IMR-90 (cell line): ENCODE measurements at regions of chr7 and their contacts with region 1.

Region 1: DNA sequence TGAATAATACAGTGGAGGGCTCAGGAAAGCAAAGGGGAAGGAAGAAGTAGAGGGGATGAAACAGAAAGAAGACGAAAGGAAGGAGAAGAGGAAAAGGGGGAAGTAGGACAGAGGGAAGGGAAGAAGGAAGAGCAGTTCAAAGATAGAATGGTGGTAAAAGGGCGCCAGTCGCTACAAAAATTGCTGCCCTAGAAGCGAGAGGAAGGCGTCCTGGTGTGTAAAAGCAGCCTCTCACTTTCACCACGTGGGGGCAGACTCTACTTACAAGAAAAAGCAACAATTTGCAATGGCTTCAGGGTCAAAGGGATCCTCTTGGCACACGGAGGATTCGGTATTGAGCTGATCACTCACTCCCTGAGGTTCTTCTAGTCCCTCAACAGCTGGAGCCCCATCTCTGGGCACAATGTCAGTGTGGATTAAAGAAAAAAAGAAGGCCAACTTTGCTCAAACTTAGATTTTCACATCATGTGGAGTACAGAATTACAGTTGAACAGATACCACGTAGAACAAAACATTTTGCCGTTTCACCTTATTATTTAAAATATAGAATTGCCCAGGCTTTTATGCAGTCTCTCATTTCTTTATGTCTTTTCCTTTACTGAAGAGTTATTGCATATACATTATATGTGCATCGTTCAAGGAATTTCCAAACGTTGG is 31.4 kb upstream of the NPVF start:
- DNase-seq: peak; percentile 76
- ATAC-seq: peak; percentile 93
- H3K4me3 ChIP-seq: no peak overlapping the region
- H3K27ac ChIP-seq: no peak overlapping the region
- H3K4me1 ChIP-seq: no peaks in the 10 kb centered on the region
- H3K27me3 ChIP-seq: peaks cover 3% of the 10 kb centered on the region
- CTCF ChIP-seq: peak; percentile 84
- POLR2A ChIP-seq: no peak
- RAD21 ChIP-seq: peak; percentile 81

Region 2: DNA sequence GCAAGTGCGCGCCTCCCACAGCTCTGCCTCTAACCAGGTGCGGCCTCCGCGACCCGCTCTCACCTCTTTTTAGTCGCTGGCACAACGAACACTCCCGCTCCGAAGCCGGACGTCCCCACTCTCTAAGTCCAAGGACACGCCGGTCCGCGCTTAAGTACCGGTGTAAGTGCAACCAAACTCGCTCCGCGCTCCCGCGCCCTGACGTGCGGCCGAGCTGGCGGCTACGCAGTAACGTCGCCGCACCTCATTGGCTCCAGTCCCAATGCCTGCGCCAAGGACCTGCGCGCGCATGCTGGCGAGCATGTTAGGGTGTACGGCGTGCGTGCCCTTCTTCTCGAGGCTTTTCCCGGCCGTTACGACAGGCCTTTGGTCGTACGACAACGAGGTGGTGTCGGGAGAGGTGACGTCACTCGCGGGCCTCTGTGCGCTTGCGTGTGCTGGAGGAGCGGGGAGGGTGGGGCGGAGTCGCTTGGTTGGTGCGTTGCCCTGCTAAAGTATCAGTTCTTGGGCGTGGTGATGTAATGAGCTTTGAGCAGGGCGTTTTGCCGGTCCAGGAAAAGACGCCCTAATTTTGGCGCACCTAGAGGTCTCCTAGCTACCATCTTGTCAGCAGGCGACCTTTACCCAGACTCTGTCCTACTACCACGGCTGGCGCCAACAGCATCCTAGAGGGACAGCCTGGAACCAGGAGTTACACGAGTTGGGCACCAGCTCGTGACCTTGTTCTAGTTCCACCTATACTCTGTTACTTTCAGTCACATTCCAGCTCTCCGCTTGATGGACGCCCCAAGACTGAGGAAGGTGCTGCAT is 134.4 kb before region 1 on chr7 and contains the start of gene CYCS:
- CTCF ChIA-PET with region 1: no interaction called
- POLR2A ChIA-PET with region 1: no interaction called
- dilution Hi-C with region 1: no loop called
- in situ Hi-C with region 1: no loop called
- intact Hi-C with region 1: no loop called
- DNase-seq: peak; percentile 100
- ATAC-seq: peak; percentile 95
- H3K4me3 ChIP-seq: peak within 1 kb of the TSS; percentile 59
- H3K27ac ChIP-seq: peak within 1 kb of the TSS; percentile 76
- H3K4me1 ChIP-seq: no peaks in the 10 kb centered on the region
- H3K27me3 ChIP-seq: no peaks in the 10 kb centered on the region
- CTCF ChIP-seq: no peak
- POLR2A ChIP-seq: peak; percentile 100
- RAD21 ChIP-seq: no peak
- total RNA-seq, gene CYCS: 22.9 and 65.3 TPM in 2 replicates

Region 3: GRCh38 chr7:25187932-25188331 is 71.8 kb before region 1 on chr7:
- CTCF ChIA-PET with region 1: no interaction called
- POLR2A ChIA-PET with region 1: no interaction called
- dilution Hi-C with region 1: no loop called
- in situ Hi-C with region 1: no loop called
- intact Hi-C with region 1: no loop called
- DNase-seq: no peak
- ATAC-seq: no peak
- H3K4me3 ChIP-seq: no peak overlapping the region
- H3K27ac ChIP-seq: no peak overlapping the region
- H3K4me1 ChIP-seq: no peaks in the 10 kb centered on the region
- H3K27me3 ChIP-seq: peaks cover 11% of the 10 kb centered on the region
- CTCF ChIP-seq: no peak
- POLR2A ChIP-seq: no peak
- RAD21 ChIP-seq: no peak

Region 4: DNA sequence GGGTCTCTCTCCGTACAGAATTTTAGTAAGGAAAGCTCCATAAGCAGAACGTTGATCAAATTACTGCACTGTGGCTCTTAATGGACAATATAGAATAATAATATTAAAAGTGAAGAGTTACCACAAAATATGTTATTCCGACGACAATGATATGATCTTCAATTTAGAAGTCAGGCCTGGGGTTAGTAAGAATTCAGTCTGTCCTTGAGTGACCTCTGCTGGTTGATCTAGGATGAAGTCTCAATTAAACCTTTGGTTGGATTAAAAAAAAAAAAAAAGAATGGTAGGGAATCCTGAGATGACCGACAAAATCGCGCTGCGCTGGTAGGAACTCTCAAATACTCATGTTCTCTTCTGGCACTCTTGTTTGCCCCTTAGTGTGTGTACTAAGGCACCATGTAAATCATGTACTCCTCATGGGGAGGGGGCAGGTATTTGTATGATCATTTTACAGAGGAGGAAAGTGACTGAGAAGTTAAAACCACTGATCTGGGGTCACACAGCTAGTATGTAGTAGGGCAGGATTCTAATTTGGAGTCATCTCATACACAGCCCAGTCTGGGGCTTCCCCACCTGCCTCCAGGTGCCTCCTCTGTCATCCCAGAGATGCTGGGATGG is 129.9 kb after region 1 on chr7:
- CTCF ChIA-PET with region 1: interaction called, 7 read pairs
- POLR2A ChIA-PET with region 1: no interaction called
- dilution Hi-C with region 1: no loop called
- in situ Hi-C with region 1: loop called (anchors 5 kb)
- intact Hi-C with region 1: loop called (anchors 1 kb)
- DNase-seq: peak; percentile 42
- ATAC-seq: peak; percentile 73
- H3K4me3 ChIP-seq: no peak overlapping the region
- H3K27ac ChIP-seq: no peak overlapping the region
- H3K4me1 ChIP-seq: no peaks in the 10 kb centered on the region
- H3K27me3 ChIP-seq: peaks cover 6% of the 10 kb centered on the region
- CTCF ChIP-seq: peak; percentile 57
- POLR2A ChIP-seq: no peak
- RAD21 ChIP-seq: peak; percentile 52

Region 5: GRCh38 chr7:25559581-25560367 is 300.1 kb after region 1 on chr7:
- CTCF ChIA-PET with region 1: no interaction called
- POLR2A ChIA-PET with region 1: no interaction called
- dilution Hi-C with region 1: no loop called
- in situ Hi-C with region 1: loop called (anchors 5 kb)
- intact Hi-C with region 1: no loop called
- DNase-seq: no peak
- ATAC-seq: no peak
- H3K4me3 ChIP-seq: no peak overlapping the region
- H3K27ac ChIP-seq: no peak overlapping the region
- H3K4me1 ChIP-seq: no peaks in the 10 kb centered on the region
- H3K27me3 ChIP-seq: no peaks in the 10 kb centered on the region; the same call in 1 of the 2 replicates
- CTCF ChIP-seq: no peak
- POLR2A ChIP-seq: no peak
- RAD21 ChIP-seq: no peak

Region 6: DNA sequence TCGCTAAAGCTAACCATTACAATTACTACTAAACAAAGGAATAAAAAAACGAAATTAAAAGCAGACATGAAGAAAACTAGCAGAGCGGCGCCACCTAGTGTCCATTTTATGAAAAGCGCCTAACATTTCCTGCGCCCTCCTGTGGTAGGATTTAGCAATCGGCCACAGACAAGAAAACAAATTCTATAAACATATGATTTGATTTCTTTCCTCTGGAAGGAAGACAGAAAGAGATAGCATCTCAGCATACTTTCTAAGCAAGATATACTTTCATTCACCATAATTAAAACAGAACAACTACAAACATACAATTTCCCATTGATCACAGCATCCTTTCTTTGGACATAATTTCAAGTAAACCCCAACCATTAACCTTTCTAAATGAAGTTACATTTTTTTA is 306.2 kb after region 1 on chr7:
- CTCF ChIA-PET with region 1: interaction called, 5 read pairs
- POLR2A ChIA-PET with region 1: no interaction called
- dilution Hi-C with region 1: no loop called
- in situ Hi-C with region 1: loop called (anchors 5 kb)
- intact Hi-C with region 1: loop called (anchors 1 kb)
- DNase-seq: peak; percentile 69
- ATAC-seq: peak; percentile 65
- H3K4me3 ChIP-seq: no peak overlapping the region
- H3K27ac ChIP-seq: no peak overlapping the region
- H3K4me1 ChIP-seq: no peaks in the 10 kb centered on the region
- H3K27me3 ChIP-seq: no peaks in the 10 kb centered on the region; the same call in 1 of the 2 replicates
- CTCF ChIP-seq: peak; percentile 100; the same call in 1 of the 2 replicates
- POLR2A ChIP-seq: no peak
- RAD21 ChIP-seq: peak; percentile 71

Region 7: DNA sequence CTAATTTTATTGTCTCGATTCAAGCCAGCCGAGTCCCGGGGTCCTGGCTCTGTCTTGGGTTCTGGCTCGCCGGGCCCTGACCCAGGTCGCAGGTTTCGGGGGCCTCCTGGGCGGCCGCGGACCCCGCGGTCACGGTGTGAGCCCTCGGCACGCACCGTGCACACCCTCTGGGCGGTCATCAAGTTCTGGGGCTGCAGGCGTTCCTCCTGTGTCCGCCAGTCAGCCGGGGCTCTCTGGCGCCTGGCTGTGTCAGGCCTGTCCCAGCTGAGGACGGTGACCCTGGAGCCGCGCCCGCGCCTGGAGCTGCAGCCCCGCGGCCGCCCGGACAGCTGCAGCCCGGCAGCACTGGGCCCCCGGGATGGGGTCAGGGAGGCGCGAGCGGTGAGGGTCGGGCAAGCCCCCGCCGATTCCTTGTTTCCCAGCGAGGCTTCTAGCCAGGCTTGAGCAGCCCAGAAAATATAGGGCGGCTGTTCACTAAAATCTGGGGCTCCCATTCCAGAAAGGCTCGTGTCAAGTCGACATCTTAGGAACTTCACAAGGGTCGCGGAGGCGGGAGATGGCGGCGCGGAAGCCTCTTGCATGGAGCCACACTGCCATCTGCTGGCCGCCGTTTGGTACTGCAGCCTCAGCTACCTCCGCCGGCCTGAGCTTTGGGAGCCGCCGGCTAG is 1901.0 kb after region 1 on chr7:
- CTCF ChIA-PET with region 1: no interaction called
- POLR2A ChIA-PET with region 1: no interaction called
- dilution Hi-C with region 1: no loop called
- in situ Hi-C with region 1: no loop called
- intact Hi-C with region 1: loop called (anchors 10 kb)
- DNase-seq: peak; percentile 77
- ATAC-seq: peak; percentile 89
- H3K4me3 ChIP-seq: peak overlapping the region; percentile 55
- H3K27ac ChIP-seq: no peak overlapping the region
- H3K4me1 ChIP-seq: peaks cover 1% of the 10 kb centered on the region; the same call in 1 of the 2 replicates
- H3K27me3 ChIP-seq: peaks cover 28% of the 10 kb centered on the region
- CTCF ChIP-seq: peak; percentile 95
- POLR2A ChIP-seq: no peak
- RAD21 ChIP-seq: peak; percentile 96